H1 (cell line): ENCODE measurements at regions of chr2 and their contacts with region 1.

Region 1: GRCh38 chr2:178414266-178415247 is 36.4 kb downstream of the PRKRA start:
- DNase-seq: peak; percentile 66 to 88
- H3K4me3 ChIP-seq: peak overlapping the region; percentile 42 to 75 (median 62)
- H3K27ac ChIP-seq: no peak overlapping the region
- H3K4me1 ChIP-seq: peaks cover 0 to 2% (median 0%) of the 10 kb centered on the region in 4 experiments; a peak in 1 of 7 replicates
- H3K27me3 ChIP-seq: no peaks in the 10 kb centered on the region
- CTCF ChIP-seq: peak; percentile 91 to 97 (median 93)
- EP300 ChIP-seq: no peak
- POLR2A ChIP-seq: peak in 1 of 2 experiments; percentile 61; a peak in 2 of 3 replicates
- RAD21 ChIP-seq: peak; percentile 85 to 88

Region 2: DNA sequence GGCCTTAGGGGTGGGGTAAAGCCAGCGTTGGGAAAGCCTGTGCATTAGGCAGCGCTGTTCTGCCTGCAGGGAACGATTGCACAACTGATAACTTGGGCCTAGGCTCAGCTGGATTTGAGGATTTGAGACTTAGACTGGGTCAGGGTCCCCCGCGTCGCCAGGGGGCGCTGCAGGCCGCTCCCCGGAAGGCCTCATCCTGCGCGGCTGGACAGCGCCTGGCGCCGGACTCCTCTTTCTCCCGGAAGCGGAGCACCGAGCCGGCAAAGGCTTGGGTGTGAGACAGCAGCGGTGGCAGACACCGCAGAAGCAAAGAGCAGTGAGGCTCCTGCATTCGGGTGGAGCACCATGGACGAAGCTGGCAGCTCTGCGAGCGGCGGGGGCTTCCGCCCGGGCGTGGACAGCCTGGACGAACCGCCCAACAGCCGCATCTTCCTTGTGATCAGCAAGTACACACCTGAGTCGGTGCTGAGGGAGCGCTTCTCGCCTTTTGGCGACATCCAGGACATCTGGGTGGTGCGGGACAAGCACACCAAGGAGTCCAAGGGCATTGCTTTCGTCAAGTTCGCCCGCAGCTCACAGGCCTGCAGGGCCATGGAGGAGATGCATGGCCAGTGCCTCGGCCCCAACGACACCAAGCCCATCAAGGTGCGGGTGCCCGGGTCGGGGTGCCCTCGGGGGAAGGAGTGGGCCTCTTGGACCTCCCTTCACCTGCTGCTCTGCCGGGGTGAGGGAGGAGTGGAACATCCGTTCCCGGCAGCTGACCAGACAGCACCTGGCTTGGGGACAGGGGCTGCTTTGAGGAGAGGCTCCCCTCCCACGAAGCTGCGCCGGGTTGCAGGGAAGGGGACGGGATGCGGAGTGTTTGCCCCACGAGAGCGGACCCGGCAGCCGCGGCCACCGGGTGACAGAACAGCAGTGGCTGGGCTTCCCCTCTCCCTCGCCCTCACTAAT is 302.1 kb before region 1 on chr2 and contains the start of gene RBM45:
- CTCF ChIA-PET with region 1: interaction called, 34 read pairs
- POLR2A ChIA-PET with region 1: interaction called, 14 read pairs
- DNase-seq: peak; percentile 87 to 94
- H3K4me3 ChIP-seq: peak within 1 kb of the TSS; percentile 65 to 89 (median 86)
- H3K27ac ChIP-seq: no peak within 1 kb of the TSS
- H3K4me1 ChIP-seq: peaks cover 0 to 4% (median 0%) of the 10 kb centered on the region in 4 experiments; a peak in 1 of 7 replicates
- H3K27me3 ChIP-seq: no peaks in the 10 kb centered on the region
- CTCF ChIP-seq: peak; percentile 87 to 95 (median 91)
- EP300 ChIP-seq: peak in 1 of 2 experiments; percentile 43; a peak in 1 of 3 replicates
- POLR2A ChIP-seq: peak in 1 of 2 experiments; percentile 87; a peak in 2 of 3 replicates
- RAD21 ChIP-seq: peak; percentile 72 to 83
- total RNA-seq, gene RBM45: 10.4 and 11.9 TPM in 2 replicates

Region 3: GRCh38 chr2:178136321-178137025 is 278.1 kb before region 1 on chr2:
- CTCF ChIA-PET with region 1: interaction called, 31 read pairs
- POLR2A ChIA-PET with region 1: no interaction called
- DNase-seq: no peak
- H3K4me3 ChIP-seq: no peak overlapping the region
- H3K27ac ChIP-seq: no peak overlapping the region
- H3K4me1 ChIP-seq: peaks cover 0 to 3% (median 1%) of the 10 kb centered on the region in 4 experiments; a peak in 4 of 7 replicates
- H3K27me3 ChIP-seq: no peaks in the 10 kb centered on the region
- CTCF ChIP-seq: no peak
- EP300 ChIP-seq: no peak
- POLR2A ChIP-seq: no peak
- RAD21 ChIP-seq: no peak

Region 4: GRCh38 chr2:178397002-178397605 is 17.5 kb before region 1 on chr2:
- CTCF ChIA-PET with region 1: interaction called, 64 read pairs
- POLR2A ChIA-PET with region 1: interaction called, 15 read pairs
- DNase-seq: no peak
- H3K4me3 ChIP-seq: no peak overlapping the region
- H3K27ac ChIP-seq: no peak overlapping the region
- H3K4me1 ChIP-seq: no peaks in the 10 kb centered on the region
- H3K27me3 ChIP-seq: no peaks in the 10 kb centered on the region
- CTCF ChIP-seq: peak in 2 of 3 experiments; percentile 24 to 62; a peak in 2 of 4 replicates
- EP300 ChIP-seq: no peak
- POLR2A ChIP-seq: no peak
- RAD21 ChIP-seq: peak in 1 of 2 experiments; percentile 12; a peak in 3 of 4 replicates

Region 5: DNA sequence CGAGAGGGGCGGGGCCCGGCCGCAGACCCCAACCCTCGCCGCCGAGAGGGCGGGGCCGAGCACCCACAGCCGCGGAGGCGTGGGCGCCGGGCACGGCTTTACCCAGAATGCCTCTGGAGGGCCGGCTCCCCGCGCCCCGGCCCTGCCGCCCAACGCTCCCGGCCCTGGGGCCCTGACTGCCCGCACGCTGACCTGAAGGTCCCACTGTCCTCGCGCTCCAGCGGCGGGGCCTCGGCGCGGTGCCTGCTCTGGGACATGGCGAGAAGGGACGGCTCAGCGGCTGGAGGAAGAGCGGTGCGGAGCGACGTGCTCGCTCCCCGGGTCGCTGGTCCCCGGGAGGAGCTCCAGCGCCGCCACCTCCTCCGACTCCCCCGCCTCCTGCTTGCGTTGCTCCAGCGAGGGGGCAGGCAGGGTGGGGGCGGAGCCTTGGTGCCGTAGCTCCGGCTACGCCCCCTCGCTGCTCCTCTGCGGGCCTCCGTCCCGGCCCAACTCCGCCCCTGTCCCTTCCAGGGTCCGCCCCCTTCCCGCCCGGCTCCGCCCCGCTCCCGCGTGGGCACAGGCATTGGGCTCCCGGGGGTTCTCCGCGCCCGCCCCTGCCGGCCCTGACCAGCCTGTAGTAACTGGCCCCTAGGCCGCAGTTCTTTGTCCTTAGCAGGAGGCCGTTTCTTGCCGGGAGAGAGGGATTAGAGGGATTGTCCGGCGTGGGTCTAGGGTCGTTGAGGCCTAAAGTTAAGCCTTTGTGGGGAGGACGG is 36.4 kb after region 1 on chr2 and contains the starts of genes PJVK and PRKRA:
- CTCF ChIA-PET with region 1: interaction called, 5 read pairs
- POLR2A ChIA-PET with region 1: interaction called, 30 read pairs
- DNase-seq: peak; percentile 93 to 98
- H3K4me3 ChIP-seq: peak within 1 kb of the TSS; percentile 67 to 96 (median 92)
- H3K27ac ChIP-seq: peak within 1 kb of the TSS; percentile 99
- H3K4me1 ChIP-seq: peaks cover 0 to 2% (median 0%) of the 10 kb centered on the region in 4 experiments; a peak in 2 of 7 replicates
- H3K27me3 ChIP-seq: no peaks in the 10 kb centered on the region
- CTCF ChIP-seq: no peak
- EP300 ChIP-seq: no peak
- POLR2A ChIP-seq: peak; percentile 89 to 97
- RAD21 ChIP-seq: no peak
- total RNA-seq, gene PJVK: 2.3 and 2.4 TPM in 2 replicates
- total RNA-seq, gene PRKRA: 55.3 and 60.4 TPM in 2 replicates